Activated CD4-positive, alpha-beta memory T cell treated with anti-CD3 and anti-CD28 coated beads for 36 hours (primary cell): ENCODE measurements at regions of chr12 and their contacts with region 1.

Region 1: GRCh38 chr12:69059483-69060457 is 126.8 kb upstream of the CPM start:
- DNase-seq: peak; percentile 35
- H3K4me3 Mint-ChIP-seq: no peak overlapping the region
- H3K27ac Mint-ChIP-seq: peak overlapping the region; percentile 70
- H3K4me1 Mint-ChIP-seq: peaks cover 33% of the 10 kb centered on the region
- H3K27me3 Mint-ChIP-seq: no peaks in the 10 kb centered on the region

Region 2: GRCh38 chr12:69007101-69007854 is 52.5 kb before region 1 on chr12:
- CTCF ChIA-PET with region 1: no interaction called
- POLR2A ChIA-PET with region 1: no interaction called
- intact Hi-C with region 1: loop called (anchors 2 kb)
- DNase-seq: peak; percentile 32
- H3K4me3 Mint-ChIP-seq: no peak overlapping the region
- H3K27ac Mint-ChIP-seq: no peak overlapping the region
- H3K4me1 Mint-ChIP-seq: peaks cover 11% of the 10 kb centered on the region
- H3K27me3 Mint-ChIP-seq: peaks cover 11% of the 10 kb centered on the region